B cell (primary cell): ENCODE measurements at regions of chr10 and their contacts with region 1.

Region 1: DNA sequence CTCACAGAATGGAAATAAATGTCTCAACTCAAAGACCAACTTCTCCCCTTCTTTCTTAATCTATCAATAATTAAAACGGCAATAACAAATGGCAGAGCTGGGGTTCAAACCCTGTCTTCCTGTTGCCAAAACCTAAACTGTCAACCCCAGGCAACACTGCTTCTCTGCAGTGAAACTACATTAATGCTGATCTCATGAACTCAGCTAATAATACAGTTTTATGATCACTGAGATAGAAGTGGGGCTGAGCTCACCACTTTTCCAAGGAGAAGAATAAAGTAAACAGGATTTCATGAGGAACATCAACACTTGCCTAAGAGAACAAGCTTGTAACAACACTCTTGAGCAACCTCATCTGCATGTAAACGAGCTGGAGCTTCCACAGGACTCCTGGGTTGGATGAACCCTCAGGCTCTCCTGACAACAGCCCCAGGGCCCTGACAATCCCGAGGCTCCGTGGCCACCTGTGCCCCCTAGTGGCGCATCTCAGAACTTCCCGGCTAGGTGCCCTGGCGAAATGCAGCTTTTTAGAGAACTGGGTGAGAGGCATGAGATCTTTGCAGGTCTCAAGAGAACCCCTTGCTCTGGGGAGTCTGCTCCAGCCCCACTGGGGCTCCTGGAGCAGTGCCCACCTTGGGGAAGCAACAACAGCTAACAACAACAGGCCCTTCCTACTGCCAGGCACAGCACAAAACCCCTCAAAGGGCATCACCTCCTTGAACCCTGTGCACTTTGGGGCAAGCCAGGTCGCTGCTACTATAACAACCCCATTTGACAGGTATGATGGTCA is 169.3 kb downstream of the SH3PXD2A start:
- DNase-seq: peak; percentile 83
- ATAC-seq: peak; percentile 96
- H3K4me3 ChIP-seq: no peak overlapping the region
- H3K4me3 Mint-ChIP-seq: no peak overlapping the region
- H3K27ac ChIP-seq: no peak overlapping the region
- H3K27ac Mint-ChIP-seq: peak overlapping the region; percentile 26
- H3K4me1 ChIP-seq: peaks cover 3 to 10% of the 10 kb centered on the region in 2 donors
- H3K4me1 Mint-ChIP-seq: peaks cover 21% of the 10 kb centered on the region
- H3K27me3 ChIP-seq: no peaks in the 10 kb centered on the region
- H3K27me3 Mint-ChIP-seq: no peaks in the 10 kb centered on the region
- CTCF ChIP-seq: peak; percentile 93

Region 2: DNA sequence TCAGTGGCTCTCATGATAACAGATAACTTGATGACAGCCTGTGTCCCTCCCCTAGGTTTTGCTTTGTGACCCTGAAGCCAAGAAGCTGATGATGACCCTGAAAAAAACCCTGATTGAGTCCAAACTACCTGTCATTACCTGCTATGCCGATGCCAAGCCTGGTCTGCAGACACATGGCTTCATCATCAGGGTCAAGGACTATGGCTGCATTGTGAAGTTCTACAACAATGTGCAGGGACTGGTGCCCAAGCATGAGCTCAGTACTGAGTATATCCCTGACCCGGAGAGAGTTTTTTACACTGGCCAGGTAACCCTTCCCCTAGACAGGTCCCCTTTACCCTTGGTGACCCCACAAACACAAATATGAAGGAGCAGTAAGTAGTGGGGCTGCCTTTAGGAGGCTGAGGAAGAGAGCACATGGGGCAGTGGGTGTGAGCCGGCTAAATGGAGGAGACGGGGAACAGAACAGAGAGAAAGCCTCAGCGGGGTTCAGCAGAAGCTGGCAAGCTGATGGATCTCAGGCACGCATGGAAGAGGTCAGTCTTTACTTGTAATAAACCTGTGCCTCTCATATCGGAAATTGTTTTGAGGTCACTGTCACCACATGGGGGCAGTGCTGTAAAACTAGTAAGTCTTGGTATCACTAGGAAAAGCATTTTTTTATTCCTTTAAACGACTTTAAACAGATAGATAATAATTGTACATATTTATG is 269.5 kb before region 1 on chr10:
- CTCF ChIA-PET with region 1: interaction called, 12 read pairs
- POLR2A ChIA-PET with region 1: no interaction called
- intact Hi-C with region 1: no loop called
- DNase-seq: peak; percentile 76
- ATAC-seq: peak; percentile 53
- H3K4me3 ChIP-seq: no peak overlapping the region
- H3K4me3 Mint-ChIP-seq: no peak overlapping the region
- H3K27ac ChIP-seq: no peak overlapping the region
- H3K27ac Mint-ChIP-seq: no peak overlapping the region
- H3K4me1 ChIP-seq: no peaks in the 10 kb centered on the region
- H3K4me1 Mint-ChIP-seq: no peaks in the 10 kb centered on the region
- H3K27me3 ChIP-seq: no peaks in the 10 kb centered on the region
- H3K27me3 Mint-ChIP-seq: no peaks in the 10 kb centered on the region
- CTCF ChIP-seq: peak; percentile 84

Region 3: GRCh38 chr10:103592186-103593021 is 93.7 kb before region 1 on chr10:
- CTCF ChIA-PET with region 1: interaction called, 35 read pairs
- POLR2A ChIA-PET with region 1: no interaction called
- intact Hi-C with region 1: no loop called
- DNase-seq: peak; percentile 57
- ATAC-seq: peak; percentile 77
- H3K4me3 ChIP-seq: no peak overlapping the region
- H3K4me3 Mint-ChIP-seq: no peak overlapping the region
- H3K27ac ChIP-seq: no peak overlapping the region
- H3K27ac Mint-ChIP-seq: no peak overlapping the region
- H3K4me1 ChIP-seq: no peaks in the 10 kb centered on the region
- H3K4me1 Mint-ChIP-seq: no peaks in the 10 kb centered on the region
- H3K27me3 ChIP-seq: no peaks in the 10 kb centered on the region
- H3K27me3 Mint-ChIP-seq: no peaks in the 10 kb centered on the region
- CTCF ChIP-seq: peak; percentile 73

Region 4: GRCh38 chr10:103605359-103606095 is 80.5 kb before region 1 on chr10:
- CTCF ChIA-PET with region 1: interaction called, 46 read pairs
- POLR2A ChIA-PET with region 1: no interaction called
- intact Hi-C with region 1: no loop called
- DNase-seq: peak; percentile 44
- ATAC-seq: no peak
- H3K4me3 ChIP-seq: no peak overlapping the region
- H3K4me3 Mint-ChIP-seq: no peak overlapping the region
- H3K27ac ChIP-seq: no peak overlapping the region
- H3K27ac Mint-ChIP-seq: no peak overlapping the region
- H3K4me1 ChIP-seq: no peaks in the 10 kb centered on the region
- H3K4me1 Mint-ChIP-seq: no peaks in the 10 kb centered on the region
- H3K27me3 ChIP-seq: no peaks in the 10 kb centered on the region
- H3K27me3 Mint-ChIP-seq: no peaks in the 10 kb centered on the region
- CTCF ChIP-seq: peak; percentile 52

Region 5: DNA sequence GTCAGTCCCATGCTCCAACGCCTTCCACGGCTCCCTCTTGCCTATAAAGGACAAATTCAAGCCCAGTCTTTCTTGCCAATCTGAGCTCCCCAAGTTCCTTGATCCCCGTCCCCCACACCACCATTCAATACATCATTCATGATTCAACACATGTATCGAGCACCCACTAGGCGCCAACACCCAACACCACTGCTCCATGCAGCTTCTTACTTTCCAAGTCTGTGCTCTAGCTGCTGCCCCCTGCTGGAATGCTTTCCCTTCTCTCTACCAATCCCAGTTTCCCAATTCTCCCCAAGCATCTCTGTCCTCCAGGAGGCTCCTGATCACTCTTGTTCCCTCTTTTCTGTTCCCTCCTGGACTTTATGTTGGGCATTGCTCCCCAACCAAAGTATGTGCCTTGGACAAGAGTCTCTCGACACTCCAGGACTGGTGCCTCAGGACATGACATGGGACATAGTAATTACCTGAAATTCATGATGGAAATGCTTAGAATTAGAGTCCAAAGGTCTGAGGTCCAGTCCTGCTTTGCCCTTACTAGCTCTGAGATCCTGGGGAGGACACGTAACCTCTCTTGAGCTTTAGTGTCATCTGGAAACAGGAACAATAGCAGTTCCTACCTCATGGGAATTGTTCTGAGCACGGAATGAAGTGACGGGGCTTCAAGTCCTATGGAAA is 19.9 kb before region 1 on chr10:
- CTCF ChIA-PET with region 1: interaction called, 44 read pairs
- POLR2A ChIA-PET with region 1: no interaction called
- intact Hi-C with region 1: no loop called
- DNase-seq: no peak
- ATAC-seq: no peak
- H3K4me3 ChIP-seq: no peak overlapping the region
- H3K4me3 Mint-ChIP-seq: no peak overlapping the region
- H3K27ac ChIP-seq: no peak overlapping the region
- H3K27ac Mint-ChIP-seq: no peak overlapping the region
- H3K4me1 ChIP-seq: peaks cover 9 to 11% of the 10 kb centered on the region in 2 donors
- H3K4me1 Mint-ChIP-seq: peaks cover 16% of the 10 kb centered on the region
- H3K27me3 ChIP-seq: peaks cover 0 to 3% (median 0%) of the 10 kb centered on the region in 4 experiments
- H3K27me3 Mint-ChIP-seq: no peaks in the 10 kb centered on the region
- CTCF ChIP-seq: no peak

Region 6: DNA sequence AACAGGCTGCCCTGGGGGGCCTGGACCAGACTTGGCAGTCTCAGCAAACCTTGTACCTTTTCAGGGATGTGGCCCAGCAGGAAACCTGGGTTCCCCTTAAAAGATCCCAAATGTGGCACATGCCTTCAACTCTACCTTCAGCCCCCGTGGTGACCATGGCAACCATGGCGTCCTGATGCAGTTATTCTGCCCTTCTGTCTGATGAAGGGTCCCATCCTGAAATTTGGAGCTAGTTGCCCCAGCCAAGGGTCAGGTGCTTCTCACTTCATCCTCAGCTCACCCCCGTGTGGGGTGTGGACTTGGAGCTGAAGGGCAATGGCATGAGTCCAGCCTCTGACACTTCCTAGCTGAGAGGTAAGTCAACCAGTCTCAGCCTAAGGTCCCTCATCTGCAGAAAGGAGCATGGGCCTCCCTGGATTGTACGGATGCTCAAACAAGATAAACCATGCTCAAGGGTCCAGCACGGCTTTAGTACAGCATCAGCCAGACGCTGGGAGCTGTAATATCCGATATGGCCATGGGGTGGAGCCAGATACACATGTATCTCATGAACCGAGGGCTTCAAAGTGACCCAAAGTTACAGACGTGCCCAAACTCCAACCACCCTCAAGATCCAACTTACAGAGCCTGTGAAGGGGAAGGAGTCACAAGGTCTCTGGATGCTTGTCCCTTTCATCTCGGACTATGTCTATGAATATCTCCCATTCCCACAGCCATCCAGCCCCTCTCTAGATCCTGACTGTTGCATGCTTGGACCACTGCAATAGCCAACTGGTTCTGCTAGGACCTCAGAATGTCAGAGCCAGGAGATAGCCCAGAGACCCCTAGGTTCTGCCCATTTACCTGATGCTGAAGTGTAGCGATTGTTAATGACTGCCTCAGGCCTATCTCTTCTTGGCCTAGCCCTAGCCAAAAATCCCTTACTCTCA is 26.8 kb after region 1 on chr10:
- CTCF ChIA-PET with region 1: interaction called, 15 read pairs
- POLR2A ChIA-PET with region 1: no interaction called
- intact Hi-C with region 1: no loop called
- DNase-seq: peak; percentile 84
- ATAC-seq: peak; percentile 92
- H3K4me3 ChIP-seq: no peak overlapping the region
- H3K4me3 Mint-ChIP-seq: no peak overlapping the region
- H3K27ac ChIP-seq: no peak overlapping the region
- H3K27ac Mint-ChIP-seq: no peak overlapping the region
- H3K4me1 ChIP-seq: no peaks in the 10 kb centered on the region
- H3K4me1 Mint-ChIP-seq: no peaks in the 10 kb centered on the region
- H3K27me3 ChIP-seq: no peaks in the 10 kb centered on the region
- H3K27me3 Mint-ChIP-seq: peaks cover 6% of the 10 kb centered on the region
- CTCF ChIP-seq: peak; percentile 94